ENCODE measurements at regions of chr3 and their contacts with region 1.

Region 1: GRCh38 chr3:46829699-46830208 is 33.5 kb downstream of the MYL3 start:
- DNase-seq: peak; percentile 42 to 59
- ATAC-seq: peak; percentile 96 to 98 (median 96)
- H3K4me3 ChIP-seq: no peak overlapping the region
- H3K4me3 Mint-ChIP-seq: peak overlapping the region; percentile 17
- H3K27ac ChIP-seq: peak overlapping the region; percentile 19
- H3K27ac Mint-ChIP-seq: peak overlapping the region; percentile 77 to 92
- H3K4me1 ChIP-seq: peaks cover 6% of the 10 kb centered on the region
- H3K4me1 Mint-ChIP-seq: peaks cover 23 to 35% of the 10 kb centered on the region in 2 donors
- H3K27me3 ChIP-seq: no peaks in the 10 kb centered on the region
- H3K27me3 Mint-ChIP-seq: no peaks in the 10 kb centered on the region
- CTCF ChIP-seq: no peak

Region 2: DNA sequence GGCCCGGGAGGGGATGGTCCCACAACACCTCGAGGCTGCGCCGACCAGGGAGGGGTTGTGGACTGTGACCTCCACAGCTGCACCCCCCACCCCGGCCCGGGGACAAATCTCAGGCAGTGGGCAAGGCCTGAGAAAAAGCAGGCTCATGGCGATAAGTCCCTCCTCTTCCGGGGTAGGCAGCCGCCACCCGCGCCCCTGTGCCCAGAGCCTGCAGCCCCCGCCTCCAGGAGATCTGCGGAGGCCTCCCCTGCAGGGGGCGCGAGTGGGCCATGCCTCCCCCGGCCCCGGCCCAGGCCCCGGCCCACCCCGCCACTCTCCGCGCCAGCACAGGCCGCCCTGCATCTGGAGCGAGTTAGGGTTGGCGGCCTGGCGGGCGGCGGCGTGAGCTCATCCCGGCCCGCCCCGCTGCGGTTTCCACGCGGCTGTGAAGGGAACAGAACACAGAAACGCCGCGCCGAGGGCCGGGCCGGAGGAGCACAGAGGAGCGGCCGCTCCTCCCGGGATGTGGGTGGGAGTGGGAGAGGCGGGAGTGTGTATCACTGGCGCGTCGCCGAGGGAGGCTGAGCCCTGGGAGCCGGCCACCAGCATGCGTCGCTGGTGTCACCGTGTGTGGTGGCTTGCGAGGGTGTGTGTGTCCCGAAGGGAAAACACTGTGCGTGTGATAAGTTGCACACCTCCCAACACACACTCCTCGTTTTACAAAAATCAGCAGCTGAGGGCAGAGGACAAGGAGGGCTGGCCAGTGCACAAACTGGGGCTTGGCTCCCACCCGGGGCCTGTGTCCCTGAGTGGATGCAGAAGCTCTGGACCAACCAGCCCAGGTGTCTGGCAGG is 16.3 kb after region 1 on chr3:
- intact Hi-C with region 1: loop called (anchors 2 kb)
- DNase-seq: peak; percentile 73 to 86
- ATAC-seq: peak; percentile 91 to 92 (median 92)
- H3K4me3 ChIP-seq: peak overlapping the region; percentile 68
- H3K4me3 Mint-ChIP-seq: peak overlapping the region; percentile 84
- H3K27ac ChIP-seq: peak overlapping the region; percentile 41
- H3K27ac Mint-ChIP-seq: peak overlapping the region; percentile 23 to 91
- H3K4me1 ChIP-seq: peaks cover 18% of the 10 kb centered on the region
- H3K4me1 Mint-ChIP-seq: peaks cover 0 to 14% of the 10 kb centered on the region in 2 donors
- H3K27me3 ChIP-seq: no peaks in the 10 kb centered on the region
- H3K27me3 Mint-ChIP-seq: no peaks in the 10 kb centered on the region
- CTCF ChIP-seq: peak; percentile 65

Measured in natural killer cell (primary cell).